ENCODE measurements at regions of chr7 and their contacts with region 1.

Region 1: DNA sequence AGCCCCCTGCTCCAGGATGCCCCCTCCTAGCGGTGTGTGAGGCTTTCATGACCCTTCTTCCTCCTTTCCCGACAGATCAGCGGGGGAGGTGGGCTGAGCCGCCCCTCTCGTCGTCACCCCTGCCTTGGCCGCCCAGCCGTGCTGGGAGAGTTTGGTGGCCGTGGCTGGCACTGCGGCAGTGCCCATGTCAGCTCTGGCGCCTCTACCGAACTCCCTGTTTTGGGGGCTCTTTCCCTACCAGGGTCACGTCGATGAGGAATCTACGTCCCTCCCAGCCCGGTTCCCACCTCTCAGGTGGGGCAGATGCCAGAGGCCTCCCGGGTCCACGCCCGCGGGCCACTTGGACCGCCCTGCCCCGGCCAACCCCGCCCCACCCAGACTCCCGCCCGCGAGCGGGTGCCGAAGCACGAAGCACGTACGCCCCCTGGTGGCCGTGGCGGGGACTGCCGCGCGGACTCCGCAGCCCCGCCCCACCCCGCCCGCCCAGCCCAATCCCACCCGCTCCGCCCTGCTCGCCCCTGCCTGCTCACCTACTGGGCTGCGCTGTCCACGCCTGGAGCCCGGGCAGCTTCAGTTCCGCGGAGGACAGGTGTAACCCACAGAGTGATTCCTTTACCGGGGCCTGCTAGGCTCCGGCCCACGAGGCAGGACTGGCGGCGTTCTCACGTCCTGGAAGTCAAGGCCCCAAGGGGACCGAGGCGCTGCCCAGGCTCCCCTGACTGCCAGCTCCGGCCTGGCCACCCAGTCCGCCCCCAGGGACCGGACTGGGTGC is 127.1 kb downstream of the UBE2H start:
- DNase-seq: peak; percentile 87 to 93 (median 91)
- ATAC-seq: peak; percentile 82
- H3K4me3 ChIP-seq: peak overlapping the region; percentile 31 to 35
- H3K27ac ChIP-seq: peak overlapping the region; percentile 32 to 81 (median 66)
- H3K4me1 ChIP-seq: peaks cover 24% of the 10 kb centered on the region
- H3K27me3 ChIP-seq: no peaks in the 10 kb centered on the region
- CTCF ChIP-seq: peak; percentile 58 to 100 (median 77)
- POLR2A ChIP-seq: peak in 2 of 3 donors; percentile 47 to 49

Region 2: DNA sequence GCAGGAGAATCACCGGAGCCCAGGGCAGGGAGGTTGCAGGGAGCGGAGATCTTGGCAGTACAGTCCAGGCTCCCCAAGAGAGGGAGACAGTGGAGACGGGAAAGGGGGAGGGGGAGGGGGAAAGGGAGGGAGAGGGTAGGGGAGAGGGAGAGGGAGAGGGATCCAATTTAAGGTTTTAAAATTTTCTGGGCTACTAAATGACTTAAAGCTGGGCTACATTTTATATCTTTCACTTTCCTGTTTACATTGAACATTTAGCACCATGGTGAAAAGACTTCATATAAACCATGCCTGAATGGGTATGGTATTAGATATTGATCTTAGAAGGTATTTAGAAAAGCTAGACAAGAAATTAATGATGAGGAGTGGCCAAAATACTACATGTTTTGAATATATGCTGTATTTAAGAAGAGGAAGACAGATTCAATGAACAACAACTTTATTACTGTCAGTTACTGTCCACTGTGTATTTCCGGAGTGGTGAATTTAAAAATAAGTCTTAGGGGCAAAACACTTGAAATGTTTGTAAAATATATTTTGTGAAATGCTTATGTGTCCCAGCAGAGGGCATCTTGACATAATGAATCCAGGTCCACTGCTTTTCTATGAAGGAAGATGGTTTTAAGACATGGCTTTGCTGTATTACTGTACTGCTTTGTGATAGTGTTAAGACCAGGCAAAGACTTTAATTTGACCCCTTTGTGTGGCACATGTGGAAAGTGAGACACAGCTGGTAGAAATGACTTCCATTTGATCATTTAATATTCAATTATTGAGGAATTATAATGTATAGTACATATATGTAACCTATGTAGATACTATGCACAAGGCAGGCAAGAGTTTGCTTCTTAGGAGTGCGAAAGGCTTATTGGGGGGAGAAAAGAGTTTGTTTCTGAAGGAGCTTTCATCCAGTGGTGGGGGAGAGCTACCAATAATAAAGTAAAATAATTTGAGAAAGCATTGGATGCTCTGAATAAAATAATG is 161.4 kb before region 1 on chr7:
- intact Hi-C with region 1: loop called (anchors 10 kb)
- DNase-seq: no peak
- ATAC-seq: peak; percentile 30
- H3K4me3 ChIP-seq: no peak overlapping the region
- H3K27ac ChIP-seq: no peak overlapping the region
- H3K4me1 ChIP-seq: no peaks in the 10 kb centered on the region
- H3K27me3 ChIP-seq: no peaks in the 10 kb centered on the region
- CTCF ChIP-seq: peak in 6 of 7 experiments; percentile 10 to 62 (median 52)
- POLR2A ChIP-seq: no peak

Region 3: DNA sequence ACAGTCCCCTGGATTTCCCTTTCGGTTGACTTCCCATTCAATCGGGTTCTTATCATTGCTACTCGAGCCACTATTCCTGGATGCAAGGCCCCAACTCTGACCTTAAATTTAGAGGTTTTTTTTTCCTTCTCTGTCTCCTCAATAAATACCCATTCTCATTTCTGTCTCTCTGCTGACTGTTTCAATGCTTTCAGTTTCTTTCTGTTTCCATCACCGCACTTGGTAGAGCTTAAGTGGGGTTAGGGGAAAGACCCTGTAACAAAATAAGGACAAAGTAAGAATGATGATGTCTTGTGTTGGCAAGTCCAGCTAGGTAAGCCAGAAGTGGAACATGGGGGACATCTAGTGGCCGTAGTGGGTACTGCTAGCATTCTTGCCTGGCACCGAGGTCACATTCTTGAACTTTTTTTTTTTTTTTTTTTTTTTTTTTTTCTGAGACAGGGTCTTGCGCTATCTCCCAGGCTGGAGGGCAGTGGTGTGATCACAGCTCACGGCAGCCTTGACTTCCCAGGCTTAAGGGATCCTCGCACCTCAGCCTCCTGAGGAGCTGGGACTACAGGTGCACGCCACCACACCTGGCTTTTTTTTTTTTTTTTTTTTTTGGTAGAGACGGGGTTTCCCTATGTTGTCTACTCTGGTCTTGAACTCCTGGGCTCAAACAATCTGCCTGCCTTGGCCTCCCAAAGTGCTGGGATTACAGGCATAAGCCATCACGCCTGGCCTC is 185.2 kb after region 1 on chr7:
- intact Hi-C with region 1: loop called (anchors 10 kb)
- DNase-seq: peak; percentile 89 to 96 (median 94)
- ATAC-seq: peak; percentile 30
- H3K4me3 ChIP-seq: no peak overlapping the region
- H3K27ac ChIP-seq: peak overlapping the region; percentile 93 to 94 (median 94)
- H3K4me1 ChIP-seq: peaks cover 37% of the 10 kb centered on the region
- H3K27me3 ChIP-seq: no peaks in the 10 kb centered on the region
- CTCF ChIP-seq: peak; percentile 83 to 99 (median 96)
- POLR2A ChIP-seq: no peak

Region 4: GRCh38 chr7:130595986-130596385 is 770.3 kb after region 1 on chr7:
- intact Hi-C with region 1: no loop called
- DNase-seq: no peak
- ATAC-seq: no peak
- H3K4me3 ChIP-seq: no peak overlapping the region
- H3K27ac ChIP-seq: no peak overlapping the region
- H3K4me1 ChIP-seq: no peaks in the 10 kb centered on the region
- H3K27me3 ChIP-seq: no peaks in the 10 kb centered on the region
- CTCF ChIP-seq: no peak
- POLR2A ChIP-seq: no peak